ENCODE measurements at regions of chr9 and their contacts with region 1.

Region 1: DNA sequence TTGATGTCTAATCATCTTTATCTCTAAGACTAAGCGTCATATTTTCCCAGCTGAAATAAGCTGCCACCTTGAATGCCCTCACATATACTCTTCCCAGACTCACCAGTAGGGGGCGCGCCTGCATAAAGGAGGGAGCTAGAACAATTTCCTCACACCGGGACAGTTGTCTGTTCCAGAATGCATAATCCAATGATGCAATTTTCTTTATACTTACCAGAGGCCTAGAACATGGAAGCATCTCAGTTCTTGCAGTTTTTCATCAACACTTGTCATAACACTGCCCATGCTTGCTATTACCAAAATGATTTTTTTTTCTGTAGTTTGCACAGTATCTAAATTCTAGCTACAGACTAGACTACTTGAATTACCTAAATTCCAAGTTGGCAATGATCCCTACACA is 203.9 kb downstream of the FRMD3 start:
- DNase-seq: peak; percentile 53
- H3K4me3 ChIP-seq: no peak overlapping the region
- CTCF ChIP-seq: peak; percentile 85

Region 2: DNA sequence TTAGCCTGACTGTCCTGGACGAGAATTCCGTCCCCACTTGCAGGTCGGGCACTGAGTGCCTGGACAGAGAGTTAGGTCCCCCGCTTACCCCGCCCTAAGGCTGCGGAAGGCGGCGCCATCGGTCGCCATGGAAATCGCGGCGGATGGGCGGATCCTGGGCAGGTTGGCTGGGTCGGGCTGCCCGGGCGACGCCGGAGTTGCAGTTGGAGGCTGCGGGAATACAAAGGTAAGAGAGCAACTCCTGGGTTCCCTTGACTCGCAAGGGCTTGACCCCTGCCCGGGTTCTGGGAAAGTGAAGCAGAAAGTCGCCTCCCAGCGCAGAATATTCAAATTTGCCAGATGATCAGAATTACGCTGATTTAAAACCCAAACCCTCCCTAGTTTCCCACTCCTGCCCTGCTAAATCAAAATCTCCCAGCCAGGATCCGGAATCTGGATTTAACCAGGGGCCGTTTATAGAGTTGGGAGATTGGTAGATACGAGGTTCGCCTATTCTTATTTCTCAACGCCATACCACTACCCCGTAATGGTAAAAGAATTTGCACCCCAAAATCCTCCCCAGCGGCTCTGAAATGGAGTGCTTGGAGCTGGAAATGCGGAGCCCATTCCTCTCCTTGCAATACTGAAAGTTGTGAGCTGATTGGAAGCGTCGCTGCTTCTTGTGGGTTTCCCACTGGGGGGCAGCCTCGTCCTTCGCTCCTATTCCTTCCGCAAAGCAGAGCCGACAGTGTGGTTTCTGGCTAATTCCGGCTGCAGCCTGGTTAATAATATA is 115.0 kb before region 1 on chr9:
- CTCF ChIA-PET with region 1: interaction called, 19 read pairs
- POLR2A ChIA-PET with region 1: no interaction called
- DNase-seq: peak; percentile 12
- H3K4me3 ChIP-seq: peak overlapping the region; percentile 62
- CTCF ChIP-seq: peak; percentile 77

Region 3: GRCh38 chr9:83238871-83239640 is 95.3 kb before region 1 on chr9:
- CTCF ChIA-PET with region 1: no interaction called
- POLR2A ChIA-PET with region 1: no interaction called
- DNase-seq: no peak
- H3K4me3 ChIP-seq: no peak overlapping the region
- CTCF ChIP-seq: no peak

Region 4: DNA sequence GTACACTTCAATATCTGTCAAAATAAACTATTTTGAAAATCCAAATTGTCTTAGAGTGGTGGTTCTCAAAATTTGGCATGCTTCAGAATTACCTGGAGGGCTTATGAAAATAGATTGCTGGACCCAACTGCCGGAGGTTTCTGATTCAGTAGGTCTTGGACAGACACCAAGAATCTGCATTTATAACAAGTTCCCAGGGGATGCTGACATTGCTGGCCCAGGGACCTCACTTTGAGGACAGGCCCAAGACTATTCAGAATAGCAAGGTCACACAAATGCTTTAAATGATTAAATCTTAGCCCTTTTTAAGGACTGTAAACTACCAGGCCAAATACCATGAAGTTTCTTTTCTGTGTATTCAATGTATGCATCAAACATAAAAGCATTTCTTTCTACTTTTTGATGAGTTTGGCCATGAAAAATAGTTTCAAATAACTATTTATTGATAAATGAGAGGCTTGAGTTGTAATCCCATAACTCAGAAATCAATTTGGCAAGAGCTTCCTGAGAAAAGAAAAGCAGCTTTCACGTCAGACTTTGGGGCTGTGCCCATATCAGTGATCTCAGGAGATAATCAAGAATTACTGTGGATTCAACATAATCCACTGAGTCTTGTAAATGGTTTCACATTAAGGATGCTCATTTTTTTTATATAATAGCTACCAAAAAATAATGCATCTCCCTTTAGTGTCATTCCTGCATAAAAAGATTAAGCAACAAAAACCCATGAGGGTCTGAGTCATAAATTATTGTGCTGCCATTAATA is 12.5 kb after region 1 on chr9:
- CTCF ChIA-PET with region 1: interaction called, 35 read pairs
- POLR2A ChIA-PET with region 1: no interaction called
- DNase-seq: no peak
- H3K4me3 ChIP-seq: no peak overlapping the region
- CTCF ChIP-seq: no peak

Region 5: DNA sequence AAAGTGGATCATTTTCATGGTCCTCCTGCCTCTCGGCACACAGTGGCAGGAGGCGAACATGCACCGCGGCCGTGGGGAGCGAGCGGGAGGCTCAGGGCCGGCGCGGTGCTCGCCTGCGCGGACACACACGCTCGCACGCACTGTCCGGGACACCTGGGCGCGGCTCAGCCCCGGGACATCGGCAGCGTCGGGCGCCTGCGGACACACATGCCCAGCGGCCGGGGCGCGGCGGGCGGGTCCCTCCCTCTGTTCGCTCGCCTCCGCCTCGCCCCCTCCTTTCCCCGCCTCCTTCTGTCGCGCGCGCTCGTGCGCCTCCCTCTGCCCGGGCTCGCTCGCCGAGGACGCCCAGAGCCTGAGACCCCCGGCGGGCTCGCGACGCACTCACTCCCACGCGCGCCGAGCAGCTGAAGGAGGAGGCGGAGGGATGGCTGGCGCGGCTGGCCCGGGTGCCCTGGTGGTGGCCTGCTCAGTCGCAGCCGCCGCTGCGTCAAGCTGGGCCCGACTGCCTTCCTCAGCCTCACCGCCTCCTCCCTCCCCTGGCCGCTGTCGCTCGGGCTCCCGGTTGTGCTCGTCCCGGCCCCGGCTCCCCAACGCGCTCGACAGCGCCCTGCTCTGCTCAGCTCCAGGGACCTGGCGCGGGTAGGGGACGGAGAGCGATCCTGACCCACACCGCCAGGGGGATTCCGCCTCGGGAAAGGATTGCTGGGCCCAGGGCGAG is 204.0 kb after region 1 on chr9 and contains the start of gene FRMD3:
- CTCF ChIA-PET with region 1: interaction called, 359 read pairs
- POLR2A ChIA-PET with region 1: no interaction called
- DNase-seq: no peak
- H3K4me3 ChIP-seq: peak within 1 kb of the TSS; percentile 66
- CTCF ChIP-seq: peak; percentile 86

Region 6: DNA sequence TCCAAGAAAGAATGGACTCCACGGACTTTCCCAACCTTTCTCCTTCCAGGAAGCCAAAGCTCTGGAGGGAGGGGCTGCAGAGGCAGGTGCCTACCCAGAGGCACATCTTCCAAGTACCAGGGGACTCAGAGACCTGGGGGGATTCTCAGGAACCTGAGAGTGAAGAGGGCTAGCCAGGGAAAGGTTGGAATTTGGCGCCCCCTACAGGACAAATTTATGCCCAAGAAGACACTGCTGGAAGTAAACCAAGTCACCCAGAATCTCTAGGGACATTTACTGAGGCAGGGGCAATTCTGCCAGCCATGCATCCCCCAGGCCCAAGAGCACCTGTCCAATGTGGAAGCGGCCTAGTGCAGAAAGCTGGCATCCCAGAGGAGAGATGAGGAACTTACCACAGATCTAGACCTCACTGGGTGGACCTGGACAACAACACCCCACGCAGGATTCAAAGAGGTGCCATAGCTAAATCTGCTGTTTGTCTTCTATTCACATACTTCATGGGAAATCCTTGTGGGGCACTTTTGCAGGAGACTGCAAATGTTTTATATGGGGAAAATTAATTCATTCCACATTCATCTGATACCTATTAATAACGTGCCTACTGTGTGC is 262.7 kb after region 1 on chr9:
- CTCF ChIA-PET with region 1: interaction called, 70 read pairs
- POLR2A ChIA-PET with region 1: no interaction called
- DNase-seq: no peak
- H3K4me3 ChIP-seq: no peak overlapping the region
- CTCF ChIP-seq: peak; percentile 36

Region 7: GRCh38 chr9:83649080-83649479 is 314.8 kb after region 1 on chr9:
- CTCF ChIA-PET with region 1: interaction called, 24 read pairs
- POLR2A ChIA-PET with region 1: no interaction called
- DNase-seq: no peak
- H3K4me3 ChIP-seq: no peak overlapping the region
- CTCF ChIP-seq: peak; percentile 84

Measured in AG04449 (cell line).